Left ventricle myocardium inferior (tissue), 1 donor: ENCODE measurements at regions of chr2 and their contacts with region 1.

Region 1: DNA sequence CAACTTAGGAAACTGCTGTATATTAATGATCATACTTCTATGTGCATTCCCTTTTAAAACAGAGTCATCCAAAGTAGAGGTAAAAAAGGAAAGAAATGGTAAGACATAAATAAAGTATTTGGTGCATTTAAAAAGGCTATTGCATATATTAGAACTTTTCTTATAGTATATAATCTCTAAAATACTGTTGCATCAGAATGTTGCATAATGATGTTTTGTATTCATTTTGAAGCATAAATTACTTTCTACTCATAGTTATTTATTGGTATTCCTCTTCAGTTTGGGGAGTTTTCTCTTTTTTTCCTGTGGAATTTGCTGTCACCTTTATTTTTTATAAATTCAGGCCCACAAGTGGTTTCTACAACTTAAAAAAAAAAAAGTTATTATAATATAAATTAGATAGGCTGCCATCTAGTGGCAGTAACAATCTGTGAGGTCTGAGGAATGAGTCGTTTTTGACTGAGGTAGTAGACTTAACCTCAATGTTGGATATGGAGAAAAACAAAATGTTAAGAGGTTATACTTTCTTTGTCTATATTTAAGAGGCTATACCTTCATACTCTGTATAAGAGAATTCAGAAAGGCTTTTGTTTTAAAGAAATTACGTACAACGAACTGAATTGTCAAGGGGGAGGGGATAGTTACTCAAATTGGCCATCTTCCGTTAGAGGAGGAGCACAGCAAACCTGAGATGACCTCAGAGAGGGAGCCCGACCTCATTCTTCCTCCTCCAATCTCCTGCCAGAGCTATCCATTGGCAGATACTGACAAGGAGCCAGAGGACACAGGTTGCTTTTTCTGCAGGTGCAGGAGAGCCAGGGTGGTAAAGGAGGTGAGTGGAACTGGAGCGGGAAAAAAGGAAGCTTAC is 23.8 kb downstream of the ANKAR start:
- DNase-seq: no peak
- H3K4me3 ChIP-seq: no peak overlapping the region
- H3K27ac ChIP-seq: no peak overlapping the region
- H3K4me1 ChIP-seq: no peaks in the 10 kb centered on the region
- H3K27me3 ChIP-seq: no peaks in the 10 kb centered on the region
- CTCF ChIP-seq: peak; percentile 79

Region 2: DNA sequence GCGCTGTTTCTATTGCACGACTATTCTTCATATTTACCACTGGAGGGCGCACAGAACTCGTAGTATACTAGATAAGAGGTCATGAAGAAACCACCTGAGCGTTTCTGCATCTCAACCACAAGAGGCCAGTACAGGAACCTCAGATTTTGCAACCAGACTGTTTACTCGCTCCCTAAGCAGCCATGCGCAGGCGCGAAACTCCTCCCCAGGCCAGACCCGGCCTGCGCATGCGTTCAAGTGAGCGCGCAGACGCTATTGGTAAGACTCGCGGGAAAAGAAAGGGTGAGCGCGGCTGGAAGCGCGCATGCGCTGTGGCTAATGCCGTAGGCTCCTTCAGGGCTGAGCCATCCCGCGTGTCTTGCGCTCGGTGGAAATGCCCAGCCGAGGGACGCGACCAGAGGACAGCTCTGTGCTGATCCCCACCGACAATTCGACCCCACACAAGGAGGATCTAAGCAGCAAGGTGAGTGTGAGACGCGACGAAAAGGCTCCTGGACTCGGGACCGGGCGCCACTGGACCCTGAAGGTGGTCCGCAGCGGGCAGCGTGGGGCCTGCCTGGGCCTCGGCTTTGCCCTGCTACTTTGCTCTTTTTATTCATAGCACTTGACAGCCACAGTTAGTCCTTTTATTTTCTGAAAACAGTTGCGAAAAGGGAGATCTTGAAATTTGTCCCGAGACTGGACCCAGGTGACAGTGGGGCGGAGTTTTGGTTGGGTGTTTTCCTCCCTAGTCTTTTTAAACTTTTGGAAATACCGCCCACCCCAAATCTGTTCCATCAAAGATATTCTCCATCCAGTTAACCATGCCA is 36.9 kb before region 1 on chr2 and contains the start of gene ASNSD1:
- intact Hi-C with region 1: loop called (anchors 2 kb)
- DNase-seq: peak; percentile 99
- H3K4me3 ChIP-seq: peak within 1 kb of the TSS; percentile 75
- H3K27ac ChIP-seq: peak within 1 kb of the TSS; percentile 86
- H3K4me1 ChIP-seq: peaks cover 38% of the 10 kb centered on the region
- H3K27me3 ChIP-seq: no peaks in the 10 kb centered on the region
- CTCF ChIP-seq: peak; percentile 98
- total RNA-seq, gene ASNSD1: 31.6 TPM

Region 3: GRCh38 chr2:189762551-189763298 is 64.5 kb after region 1 on chr2 and contains the start of gene OSGEPL1:
- intact Hi-C with region 1: no loop called
- DNase-seq: peak; percentile 93
- H3K4me3 ChIP-seq: peak within 1 kb of the TSS; percentile 86
- H3K27ac ChIP-seq: peak within 1 kb of the TSS; percentile 94
- H3K4me1 ChIP-seq: peaks cover 30% of the 10 kb centered on the region
- H3K27me3 ChIP-seq: no peaks in the 10 kb centered on the region
- CTCF ChIP-seq: peak; percentile 58
- total RNA-seq, gene OSGEPL1: 9.8 TPM